ENCODE measurements at regions of chr6 and their contacts with region 1.

Region 1: DNA sequence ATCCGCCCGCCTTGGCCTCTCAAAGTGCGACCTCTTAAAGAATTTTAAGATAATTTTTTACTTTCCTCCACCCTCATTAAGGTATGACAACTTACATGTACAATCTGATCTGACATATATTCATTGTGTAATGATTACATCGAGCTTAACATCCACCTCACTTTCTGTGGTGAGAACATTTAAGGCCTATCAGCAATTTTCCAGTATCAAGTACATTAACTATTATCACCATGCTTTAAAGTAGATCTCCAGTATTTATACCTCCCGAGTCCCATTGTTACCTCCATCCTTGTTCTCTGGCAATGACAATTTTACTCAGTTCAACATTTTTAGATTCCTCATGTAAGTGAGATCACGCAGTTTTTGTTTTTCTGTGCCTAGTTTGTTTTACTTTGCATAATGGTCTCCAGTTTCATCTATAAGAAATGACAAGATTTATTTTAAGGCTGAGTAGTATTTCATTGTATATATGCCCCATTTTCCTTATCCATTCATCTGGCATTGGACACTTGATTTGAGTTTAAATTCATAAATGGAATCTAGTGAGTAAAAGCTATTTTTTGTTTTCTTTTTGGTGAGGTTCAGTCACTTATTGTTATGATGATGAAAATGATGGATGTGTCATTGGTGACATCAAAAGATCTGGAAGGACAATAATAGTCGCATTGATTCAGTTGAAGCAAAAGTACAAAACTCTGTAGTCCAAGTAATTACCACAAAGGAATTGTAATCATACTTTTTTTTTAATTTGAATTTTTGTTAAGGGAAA is 87.0 kb downstream of the OR2B2 start:
- DNase-seq: no peak
- H3K4me3 ChIP-seq: peak overlapping the region; percentile 66
- CTCF ChIP-seq: no peak

Region 2: GRCh38 chr6:27864906-27865849 is 40.0 kb after region 1 on chr6:
- CTCF ChIA-PET with region 1: interaction called, 4 read pairs
- POLR2A ChIA-PET with region 1: interaction called, 22 read pairs
- DNase-seq: peak; percentile 89
- H3K4me3 ChIP-seq: peak overlapping the region; percentile 80
- CTCF ChIP-seq: no peak

Region 3: GRCh38 chr6:27871924-27872638 is 46.9 kb after region 1 on chr6:
- CTCF ChIA-PET with region 1: interaction called, 8 read pairs
- POLR2A ChIA-PET with region 1: interaction called, 22 read pairs
- DNase-seq: peak; percentile 88
- H3K4me3 ChIP-seq: peak overlapping the region; percentile 66
- CTCF ChIP-seq: peak; percentile 36

Measured in AG04449 (cell line).